Common myeloid progenitor, CD34-positive (primary cell): ENCODE measurements at regions of chr9 and their contacts with region 1.

Region 1: GRCh38 chr9:101530077-101530711 is 3.5 kb upstream of the RNF20 start:
- DNase-seq: peak; percentile 85 to 93 (median 91)
- H3K4me3 ChIP-seq: no peak overlapping the region
- H3K27ac ChIP-seq: no peak overlapping the region
- H3K4me1 ChIP-seq: peaks cover 6 to 15% (median 10%) of the 10 kb centered on the region in 4 experiments
- H3K27me3 ChIP-seq: peaks cover 0 to 2% (median 0%) of the 10 kb centered on the region in 5 experiments

Region 2: GRCh38 chr9:101449140-101449721 is 81.0 kb before region 1 on chr9:
- CTCF ChIA-PET with region 1: interaction called, 193 read pairs
- POLR2A ChIA-PET with region 1: interaction called, 3 read pairs
- DNase-seq: peak; percentile 71 to 84 (median 78)
- H3K4me3 ChIP-seq: peak overlapping the region; percentile 48 to 85 (median 67)
- H3K27ac ChIP-seq: no peak overlapping the region
- H3K4me1 ChIP-seq: peaks cover 0 to 6% (median 5%) of the 10 kb centered on the region in 4 experiments
- H3K27me3 ChIP-seq: peaks cover 0 to 12% (median 2%) of the 10 kb centered on the region in 5 experiments

Region 3: DNA sequence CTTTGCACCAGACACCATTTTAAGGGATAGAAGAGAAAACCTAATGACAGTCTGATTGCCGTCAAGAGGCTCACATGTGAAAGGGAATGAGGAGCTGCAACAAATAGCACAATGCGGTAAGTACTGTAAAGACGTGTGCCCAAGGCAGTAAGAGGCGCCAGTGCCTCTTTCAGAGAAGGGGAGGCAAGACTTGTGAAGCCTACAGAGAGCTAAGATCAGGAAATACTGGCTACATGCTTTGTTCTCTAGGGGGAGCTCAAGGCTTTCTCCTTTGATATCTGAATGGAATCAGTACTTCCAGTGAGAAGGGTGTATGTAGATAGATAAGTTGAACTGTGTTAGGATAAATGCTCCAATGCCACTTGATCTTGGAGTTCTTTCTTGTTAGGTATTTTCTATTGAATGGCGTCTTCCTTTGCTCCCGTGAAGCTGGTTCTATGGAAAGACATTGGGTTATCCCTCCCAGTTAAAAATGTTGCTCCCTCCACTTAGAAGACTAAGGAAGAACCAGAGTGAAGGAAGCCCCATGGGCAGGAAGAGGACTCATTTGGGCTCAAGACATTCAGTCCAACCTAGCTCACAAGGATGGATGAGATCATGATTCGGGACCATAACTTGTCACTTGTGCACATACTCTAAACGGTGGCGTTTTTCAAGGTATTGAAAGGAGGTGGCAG is 71.1 kb before region 1 on chr9:
- CTCF ChIA-PET with region 1: interaction called, 193 read pairs
- POLR2A ChIA-PET with region 1: no interaction called
- DNase-seq: peak; percentile 78 to 87 (median 82)
- H3K4me3 ChIP-seq: no peak overlapping the region
- H3K27ac ChIP-seq: no peak overlapping the region
- H3K4me1 ChIP-seq: peaks cover 0 to 2% (median 0%) of the 10 kb centered on the region in 4 experiments
- H3K27me3 ChIP-seq: peaks cover 0 to 8% (median 0%) of the 10 kb centered on the region in 5 experiments

Region 4: GRCh38 chr9:101465392-101465791 is 64.8 kb before region 1 on chr9:
- CTCF ChIA-PET with region 1: interaction called, 193 read pairs
- POLR2A ChIA-PET with region 1: no interaction called
- DNase-seq: peak; percentile 69 to 70 (median 70)
- H3K4me3 ChIP-seq: no peak overlapping the region
- H3K27ac ChIP-seq: no peak overlapping the region
- H3K4me1 ChIP-seq: peaks cover 0 to 12% (median 0%) of the 10 kb centered on the region in 4 experiments
- H3K27me3 ChIP-seq: peaks cover 0 to 6% (median 0%) of the 10 kb centered on the region in 5 experiments

Region 5: GRCh38 chr9:101486693-101487442 is 43.3 kb before region 1 on chr9:
- CTCF ChIA-PET with region 1: interaction called, 33 read pairs
- POLR2A ChIA-PET with region 1: interaction called, 3 read pairs
- DNase-seq: peak; percentile 73 to 85 (median 84)
- H3K4me3 ChIP-seq: peak overlapping the region; percentile 56 to 96 (median 80)
- H3K27ac ChIP-seq: peak overlapping the region; percentile 51 to 77
- H3K4me1 ChIP-seq: peaks cover 0 to 32% (median 14%) of the 10 kb centered on the region in 4 experiments
- H3K27me3 ChIP-seq: peaks cover 0 to 18% (median 0%) of the 10 kb centered on the region in 5 experiments

Region 6: GRCh38 chr9:101516655-101517054 is 13.5 kb before region 1 on chr9:
- CTCF ChIA-PET with region 1: interaction called, 11 read pairs
- POLR2A ChIA-PET with region 1: no interaction called
- DNase-seq: no peak
- H3K4me3 ChIP-seq: no peak overlapping the region
- H3K27ac ChIP-seq: no peak overlapping the region
- H3K4me1 ChIP-seq: no peaks in the 10 kb centered on the region
- H3K27me3 ChIP-seq: peaks cover 0 to 5% (median 0%) of the 10 kb centered on the region in 5 experiments